HepG2 (cell line): ENCODE measurements at regions of chr2 and their contacts with region 1.

Region 1: DNA sequence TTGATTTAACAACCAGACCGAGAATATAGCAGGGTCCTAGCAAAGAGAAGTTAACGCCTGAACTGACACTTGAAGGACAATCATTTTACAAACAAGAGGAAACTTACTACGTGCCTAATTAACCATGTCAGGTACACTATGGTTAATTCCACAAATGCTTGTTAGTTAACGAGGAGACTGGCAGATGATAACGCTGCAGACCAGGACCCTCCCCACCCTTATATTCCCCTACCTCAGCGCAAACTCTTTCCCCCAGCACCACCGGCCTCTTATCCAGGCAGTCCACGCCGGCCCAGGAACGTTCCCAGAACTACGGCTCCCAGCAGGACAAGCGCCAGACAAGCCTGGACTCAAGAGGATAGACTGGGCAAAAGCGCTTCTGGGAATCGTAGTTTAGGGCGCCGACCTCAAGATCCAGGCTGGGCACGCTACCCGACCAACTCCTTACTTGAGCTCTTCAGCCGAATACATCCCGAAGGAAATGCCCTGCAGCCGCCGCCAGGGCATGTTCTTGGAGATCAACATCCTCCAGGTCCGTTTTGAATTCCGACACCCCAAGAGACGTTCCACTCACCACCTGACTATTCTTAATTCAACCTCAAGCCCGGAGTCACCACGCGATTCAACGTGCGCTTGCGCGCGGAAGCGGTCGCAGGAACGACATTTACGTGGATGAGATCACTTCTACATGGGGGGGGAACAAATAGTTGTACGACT is at the start of gene POLR1A:
- DNase-seq: peak; percentile 94
- ATAC-seq: peak; percentile 98
- H3K4me3 ChIP-seq: peak within 1 kb of the TSS; percentile 88 to 96 (median 93)
- H3K27ac ChIP-seq: peak within 1 kb of the TSS; percentile 81
- H3K4me1 ChIP-seq: peaks cover 46% of the 10 kb centered on the region
- H3K27me3 ChIP-seq: peaks cover 0 to 4% of the 10 kb centered on the region in 2 experiments; a peak in 2 of 5 replicates
- CTCF ChIP-seq: no peak
- EP300 ChIP-seq: no peak
- POLR2A ChIP-seq: no peak
- RAD21 ChIP-seq: no peak
- total RNA-seq, gene POLR1A: 39.9 and 61.1 TPM in 2 replicates

Region 2: GRCh38 chr2:86140969-86141392 is 35.6 kb after region 1 on chr2:
- CTCF ChIA-PET with region 1: no interaction called
- POLR2A ChIA-PET with region 1: interaction called, 4 read pairs
- in situ Hi-C with region 1: no loop called
- intact Hi-C with region 1: loop called (anchors 5 kb)
- DNase-seq: peak; percentile 64
- ATAC-seq: peak; percentile 47
- H3K4me3 ChIP-seq: no peak overlapping the region
- H3K27ac ChIP-seq: no peak overlapping the region
- H3K4me1 ChIP-seq: peaks cover 20% of the 10 kb centered on the region
- H3K27me3 ChIP-seq: no peaks in the 10 kb centered on the region
- CTCF ChIP-seq: no peak
- EP300 ChIP-seq: no peak
- POLR2A ChIP-seq: peak in 1 of 2 experiments; percentile 35; a peak in 1 of 4 replicates
- RAD21 ChIP-seq: no peak

Region 3: GRCh38 chr2:86195055-86195807 is 89.8 kb after region 1 on chr2 and contains the start of gene IMMT:
- CTCF ChIA-PET with region 1: no interaction called
- POLR2A ChIA-PET with region 1: interaction called, 21 read pairs
- in situ Hi-C with region 1: no loop called
- intact Hi-C with region 1: loop called (anchors 5 kb)
- DNase-seq: peak; percentile 97
- ATAC-seq: peak; percentile 95
- H3K4me3 ChIP-seq: peak within 1 kb of the TSS; percentile 81 to 96 (median 91)
- H3K27ac ChIP-seq: peak within 1 kb of the TSS; percentile 95
- H3K4me1 ChIP-seq: peaks cover 53% of the 10 kb centered on the region
- H3K27me3 ChIP-seq: no peaks in the 10 kb centered on the region; a peak in 1 of 5 replicates
- CTCF ChIP-seq: no peak; the same call in 1 of the 2 replicates
- EP300 ChIP-seq: 0 out of 4 replicates have a peak, but pooled peaks of 1 of the 2 experiments have one; percentile 63
- POLR2A ChIP-seq: peak; percentile 92 to 95
- RAD21 ChIP-seq: peak; percentile 67
- total RNA-seq, gene IMMT: 119 and 174 TPM in 2 replicates